ENCODE measurements at regions of chr9 and their contacts with region 1.

Region 1: GRCh38 chr9:110152704-110153374 is 55.1 kb downstream of the C9orf152 start:
- DNase-seq: no peak
- ATAC-seq: peak; percentile 32
- H3K4me3 Mint-ChIP-seq: peak overlapping the region; percentile 39
- H3K27ac Mint-ChIP-seq: peak overlapping the region; percentile 81
- H3K4me1 Mint-ChIP-seq: peaks cover 100% of the 10 kb centered on the region
- H3K27me3 Mint-ChIP-seq: no peaks in the 10 kb centered on the region
- CTCF ChIP-seq: no peak

Region 2: DNA sequence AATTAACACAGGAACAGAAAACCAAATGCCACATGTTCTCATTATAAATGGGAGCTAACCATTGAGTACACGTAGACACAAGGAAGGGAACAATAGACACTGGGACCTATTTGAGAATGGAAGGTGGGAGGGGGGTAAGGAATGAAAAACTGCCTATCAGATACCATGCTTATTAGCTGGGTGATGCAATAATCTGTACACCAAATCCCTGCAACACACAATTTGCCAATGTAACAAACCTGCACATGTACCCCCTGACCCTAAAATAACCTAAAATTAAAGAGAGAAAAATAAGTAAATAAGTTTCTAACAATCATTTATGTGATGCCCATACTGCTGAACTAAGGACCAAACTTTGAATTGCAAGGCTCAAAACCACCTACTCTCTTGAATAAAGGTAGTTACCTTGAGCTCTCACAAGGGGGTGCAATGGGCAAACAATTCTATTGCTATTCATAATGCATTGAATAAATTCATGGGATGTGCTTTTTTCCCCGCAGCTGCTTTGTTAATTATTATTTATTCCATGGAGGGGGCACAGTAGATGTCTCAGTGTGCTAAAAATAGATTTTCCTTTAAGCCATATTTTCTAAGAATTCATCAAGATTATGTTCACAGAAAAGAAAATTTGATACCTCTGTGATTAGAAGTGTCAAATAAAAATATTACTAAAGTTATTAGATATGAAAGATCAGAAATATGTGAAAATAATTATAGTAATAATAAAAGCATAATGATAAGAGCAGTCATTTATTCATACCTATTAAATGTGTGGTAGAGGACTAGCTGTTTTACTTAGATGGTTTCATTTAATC is 578.6 kb before region 1 on chr9:
- CTCF ChIA-PET with region 1: interaction called, 3 read pairs
- POLR2A ChIA-PET with region 1: no interaction called
- intact Hi-C with region 1: loop called (anchors 5 kb)
- DNase-seq: no peak
- ATAC-seq: peak; percentile 47
- H3K4me3 Mint-ChIP-seq: no peak overlapping the region
- H3K27ac Mint-ChIP-seq: no peak overlapping the region
- H3K4me1 Mint-ChIP-seq: no peaks in the 10 kb centered on the region
- H3K27me3 Mint-ChIP-seq: peaks cover 4% of the 10 kb centered on the region
- CTCF ChIP-seq: no peak

Region 3: DNA sequence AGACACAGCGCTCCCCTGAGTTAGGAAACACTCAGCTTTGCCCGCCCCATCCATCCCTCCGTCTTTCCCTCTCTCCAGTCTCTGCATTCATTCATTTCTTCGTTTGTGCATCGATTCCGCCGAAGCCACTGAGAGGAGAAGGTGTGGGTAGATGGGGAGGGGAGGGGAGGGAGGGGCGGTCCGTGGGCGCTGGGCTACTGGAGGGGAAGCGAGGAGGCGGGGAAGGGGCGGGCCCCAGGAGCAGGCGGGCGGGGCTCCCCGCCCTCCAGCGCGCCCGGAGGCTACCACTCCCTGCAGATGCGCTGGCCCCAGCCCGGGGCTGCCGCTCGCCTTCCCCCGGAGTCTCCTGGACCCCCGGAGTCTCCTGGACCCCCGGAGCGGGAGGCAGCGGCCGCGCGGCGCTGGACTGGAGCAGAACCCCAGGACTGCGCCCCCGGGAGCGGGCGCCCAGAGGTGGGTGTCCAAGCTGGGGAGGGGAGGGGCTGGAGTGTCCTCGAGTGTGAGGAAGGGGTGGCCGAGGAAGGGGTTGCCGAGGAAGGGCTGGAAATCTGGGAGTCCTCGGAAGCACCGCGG is 104.3 kb before region 1 on chr9:
- CTCF ChIA-PET with region 1: interaction called, 4 read pairs
- POLR2A ChIA-PET with region 1: interaction called, 14 read pairs
- intact Hi-C with region 1: loop called (anchors 2 kb)
- DNase-seq: peak; percentile 85
- ATAC-seq: peak; percentile 94
- H3K4me3 Mint-ChIP-seq: peak overlapping the region; percentile 99
- H3K27ac Mint-ChIP-seq: peak overlapping the region; percentile 91
- H3K4me1 Mint-ChIP-seq: peaks cover 54% of the 10 kb centered on the region
- H3K27me3 Mint-ChIP-seq: no peaks in the 10 kb centered on the region
- CTCF ChIP-seq: no peak

Region 4: GRCh38 chr9:110110154-110110553 is 42.7 kb before region 1 on chr9:
- CTCF ChIA-PET with region 1: interaction called, 3 read pairs
- POLR2A ChIA-PET with region 1: interaction called, 13 read pairs
- intact Hi-C with region 1: loop called (anchors 5 kb)
- DNase-seq: no peak
- ATAC-seq: peak; percentile 81
- H3K4me3 Mint-ChIP-seq: peak overlapping the region; percentile 19
- H3K27ac Mint-ChIP-seq: peak overlapping the region; percentile 35
- H3K4me1 Mint-ChIP-seq: peaks cover 85% of the 10 kb centered on the region
- H3K27me3 Mint-ChIP-seq: no peaks in the 10 kb centered on the region
- CTCF ChIP-seq: no peak

Region 5: GRCh38 chr9:110217656-110218099 is 64.8 kb after region 1 on chr9:
- CTCF ChIA-PET with region 1: interaction called, 5 read pairs
- POLR2A ChIA-PET with region 1: interaction called, 3 read pairs
- intact Hi-C with region 1: loop called (anchors 2 kb)
- DNase-seq: no peak
- ATAC-seq: no peak
- H3K4me3 Mint-ChIP-seq: no peak overlapping the region
- H3K27ac Mint-ChIP-seq: no peak overlapping the region
- H3K4me1 Mint-ChIP-seq: peaks cover 4% of the 10 kb centered on the region
- H3K27me3 Mint-ChIP-seq: peaks cover 2% of the 10 kb centered on the region
- CTCF ChIP-seq: no peak

Region 6: GRCh38 chr9:111144741-111145140 is 991.9 kb after region 1 on chr9:
- CTCF ChIA-PET with region 1: no interaction called
- POLR2A ChIA-PET with region 1: no interaction called
- intact Hi-C with region 1: no loop called
- DNase-seq: no peak
- ATAC-seq: no peak
- H3K4me3 Mint-ChIP-seq: no peak overlapping the region
- H3K27ac Mint-ChIP-seq: no peak overlapping the region
- H3K4me1 Mint-ChIP-seq: no peaks in the 10 kb centered on the region
- H3K27me3 Mint-ChIP-seq: peaks cover 3% of the 10 kb centered on the region
- CTCF ChIP-seq: no peak